GM10248 (cell line): ENCODE measurements at regions of chr1 and their contacts with region 1.

Region 1: GRCh38 chr1:36342481-36343478 is 19.3 kb upstream of the EVA1B start:
- DNase-seq: peak; percentile 71
- CTCF ChIP-seq: peak; percentile 82

Region 2: GRCh38 chr1:36369061-36369861 is 26.5 kb after region 1 on chr1:
- CTCF ChIA-PET with region 1: interaction called, 63 read pairs
- POLR2A ChIA-PET with region 1: no interaction called
- DNase-seq: peak; percentile 85
- CTCF ChIP-seq: peak; percentile 91

Region 3: DNA sequence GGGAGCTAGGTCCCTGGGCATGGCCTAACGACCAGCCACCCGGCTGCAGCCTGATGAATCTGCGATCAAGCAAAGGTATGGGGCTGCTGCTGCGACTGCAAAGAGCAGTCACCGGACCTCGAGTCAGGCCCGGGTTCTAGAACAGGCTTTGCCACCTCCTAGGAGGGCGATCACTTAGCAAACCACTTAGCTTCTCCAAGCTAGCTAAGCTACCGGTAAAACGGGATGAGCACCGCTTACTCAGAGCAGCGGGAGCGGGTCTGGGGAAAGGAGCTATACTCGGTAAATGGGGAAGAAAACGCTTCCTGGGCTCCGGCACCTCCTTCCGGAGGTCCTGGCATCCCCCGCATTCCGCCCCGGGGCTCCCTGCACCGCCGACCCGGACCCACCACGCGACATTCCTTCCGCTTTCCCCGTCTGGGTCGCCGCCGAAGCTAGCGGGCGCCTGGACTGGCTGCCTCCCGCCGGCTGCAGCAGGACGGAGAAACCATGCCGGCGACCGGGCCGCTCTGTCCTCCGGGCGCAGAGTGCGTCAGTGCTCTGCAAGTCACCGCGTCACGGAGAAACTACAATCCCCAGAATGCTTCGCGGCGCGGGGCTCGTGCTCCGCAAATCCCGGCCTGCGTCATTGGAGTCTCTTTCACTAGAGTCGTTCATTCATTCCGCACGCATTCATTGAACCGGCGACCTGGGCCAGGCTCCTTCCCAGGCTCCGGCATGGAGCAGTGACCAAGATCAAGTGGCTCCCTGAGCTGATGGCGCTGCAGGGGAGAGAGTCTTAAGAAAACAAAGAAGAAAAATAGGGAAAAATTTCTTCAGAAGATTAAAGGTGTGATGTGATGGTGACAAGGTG is 54.8 kb after region 1 on chr1 and contains the start of gene LSM10:
- CTCF ChIA-PET with region 1: interaction called, 11 read pairs
- POLR2A ChIA-PET with region 1: no interaction called
- DNase-seq: peak; percentile 93
- CTCF ChIP-seq: no peak

Region 4: DNA sequence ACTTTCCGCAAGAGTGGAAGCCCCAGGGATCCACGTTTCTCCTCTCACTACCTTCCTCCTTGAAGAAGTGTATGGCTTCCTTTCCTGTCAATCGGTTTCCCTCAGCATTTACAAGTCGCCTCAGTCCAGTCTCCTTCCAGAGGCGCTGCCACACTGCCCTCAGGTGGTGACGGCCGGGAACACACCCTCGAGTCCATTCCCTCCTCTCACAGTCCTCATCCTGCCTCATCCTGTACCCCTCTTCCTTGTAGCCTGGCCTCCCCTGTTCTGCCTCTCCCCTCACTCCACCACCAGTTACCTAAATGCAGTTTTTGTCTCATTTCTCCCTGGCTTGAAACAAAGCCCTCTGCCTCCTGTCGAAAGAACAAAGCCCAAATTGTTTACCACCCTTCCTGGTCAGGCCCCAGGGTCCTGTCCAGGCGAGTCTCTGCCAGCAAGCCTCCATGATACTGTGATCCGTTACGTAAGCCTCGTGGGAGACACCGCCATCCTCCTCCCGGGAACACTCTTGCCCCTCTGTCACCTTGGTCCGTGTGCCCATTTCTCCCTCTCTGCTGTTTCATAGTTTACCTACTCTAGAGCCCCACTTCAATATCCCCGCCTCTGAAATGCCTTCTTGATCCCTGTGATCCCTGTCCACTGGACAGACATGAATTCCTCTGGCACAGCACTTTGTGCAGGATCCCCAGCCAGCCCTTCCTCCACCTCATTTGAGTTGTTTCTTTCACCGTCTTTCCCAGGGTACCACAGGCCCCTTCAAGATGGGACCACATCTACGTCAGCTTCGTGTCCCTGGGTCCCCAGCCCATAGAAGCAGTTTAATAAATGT is 78.3 kb after region 1 on chr1:
- CTCF ChIA-PET with region 1: interaction called, 73 read pairs
- POLR2A ChIA-PET with region 1: no interaction called
- DNase-seq: peak; percentile 83
- CTCF ChIP-seq: peak; percentile 95

Region 5: DNA sequence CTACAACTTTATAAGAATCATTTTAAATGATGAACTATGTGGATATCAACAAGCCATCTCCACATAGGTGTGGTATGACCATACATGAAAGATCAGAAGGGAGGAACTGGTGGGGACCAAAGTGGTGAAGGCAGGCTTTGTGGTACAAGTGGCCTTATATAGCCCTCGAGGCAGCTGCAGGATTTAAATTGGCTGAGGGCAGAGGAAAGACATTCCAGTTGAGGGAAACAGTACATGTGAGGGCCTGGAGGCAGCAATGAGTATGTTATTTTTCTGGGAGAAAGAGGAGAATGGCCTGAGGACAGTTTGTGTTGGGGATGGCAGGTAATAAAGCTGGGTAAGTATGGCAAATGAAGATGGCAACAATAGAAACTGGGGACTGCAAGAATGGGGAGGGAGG is 90.3 kb after region 1 on chr1:
- CTCF ChIA-PET with region 1: interaction called, 11 read pairs
- POLR2A ChIA-PET with region 1: no interaction called
- DNase-seq: no peak
- CTCF ChIP-seq: no peak